Endothelial cell of umbilical vein (primary cell): ENCODE measurements at regions of chr15 and their contacts with region 1.

Region 1: DNA sequence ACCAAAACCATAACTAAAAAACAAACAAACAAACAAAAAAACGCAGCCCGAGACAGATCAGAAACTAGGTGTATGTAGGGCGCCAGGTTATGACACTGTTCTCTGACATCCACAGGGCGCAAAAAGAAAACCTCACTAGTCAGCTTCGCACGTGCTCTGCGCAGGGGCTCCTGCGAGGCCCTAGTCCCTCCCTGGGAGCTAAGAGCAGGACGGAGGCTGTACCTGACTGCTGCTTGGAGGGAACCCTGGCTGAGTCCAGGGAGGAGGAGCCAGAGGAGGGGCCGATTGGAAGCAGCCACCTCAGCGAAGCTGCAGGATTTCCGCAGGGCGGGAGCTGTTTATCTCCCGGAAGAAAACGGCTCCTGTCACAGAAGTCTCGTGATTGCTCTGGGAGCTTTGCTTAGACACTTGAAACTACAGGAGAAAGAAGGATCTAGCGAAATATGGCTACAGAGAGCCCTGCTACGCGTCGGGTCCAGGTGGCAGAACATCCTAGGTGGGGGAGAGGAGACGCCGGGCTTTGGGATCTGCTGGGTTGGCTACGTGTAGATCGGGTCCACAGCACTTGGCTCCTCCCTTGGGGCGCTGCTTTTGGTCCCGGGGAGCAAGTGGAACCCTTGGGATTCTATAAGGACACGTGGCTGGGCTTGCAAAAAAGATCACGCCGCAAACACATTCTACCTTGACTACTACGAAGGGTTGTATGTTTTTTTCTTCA is at the start of gene GALK2:
- DNase-seq: peak; percentile 85
- H3K4me3 ChIP-seq: peak within 1 kb of the TSS; percentile 66 to 94 (median 88)
- H3K27ac ChIP-seq: peak within 1 kb of the TSS; percentile 78
- H3K4me1 ChIP-seq: peaks cover 10% of the 10 kb centered on the region
- H3K27me3 ChIP-seq: no peaks in the 10 kb centered on the region
- CTCF ChIP-seq: no peak
- POLR2A ChIP-seq: peak; percentile 87
- total RNA-seq, gene GALK2: 31.3 and 34.6 TPM in 2 replicates

Region 2: DNA sequence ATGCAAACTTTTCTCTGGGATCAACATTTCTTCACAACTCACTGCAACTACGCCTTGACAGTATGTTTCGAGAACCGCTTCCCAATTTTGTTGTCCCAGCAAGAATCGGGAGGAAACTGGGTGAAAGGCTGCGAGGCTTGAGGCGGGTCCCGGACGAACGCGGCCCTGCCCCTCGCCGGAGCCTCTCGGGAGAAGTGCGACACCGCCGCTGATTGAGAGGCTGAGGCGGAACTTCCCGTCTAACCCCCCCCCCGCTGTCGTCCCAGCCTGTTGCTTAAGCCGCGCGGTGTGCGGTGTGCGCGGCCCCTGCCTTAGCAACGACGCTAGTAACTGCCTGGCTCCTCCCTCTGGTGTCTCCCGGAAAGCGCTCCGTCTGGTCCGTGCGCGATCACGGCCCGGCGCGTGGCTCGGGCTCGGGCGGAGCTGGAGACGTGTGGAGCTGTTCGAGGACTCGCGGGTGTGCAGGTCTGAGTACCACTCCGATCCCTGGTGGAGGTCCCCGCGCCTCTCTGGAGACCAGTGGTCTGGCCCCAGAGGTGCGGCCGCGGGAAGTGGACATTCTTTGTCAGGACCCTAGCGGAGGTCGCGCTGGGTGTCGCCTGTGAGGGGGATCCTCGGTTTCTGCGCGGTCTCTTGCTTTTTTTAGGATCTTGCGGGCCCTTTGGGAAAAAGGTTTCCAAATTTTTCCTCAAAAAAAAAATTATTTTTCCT is 450.8 kb after region 1 on chr15 and contains the starts of genes DTWD1 and FAM227B:
- CTCF ChIA-PET with region 1: no interaction called
- POLR2A ChIA-PET with region 1: no interaction called
- dilution Hi-C with region 1: no loop called
- intact Hi-C with region 1: loop called (anchors 5 kb)
- DNase-seq: peak; percentile 98
- H3K4me3 ChIP-seq: peak within 1 kb of the TSS; percentile 79 to 95 (median 91)
- H3K27ac ChIP-seq: peak within 1 kb of the TSS; percentile 64
- H3K4me1 ChIP-seq: peaks cover 11% of the 10 kb centered on the region
- H3K27me3 ChIP-seq: no peaks in the 10 kb centered on the region
- CTCF ChIP-seq: no peak
- POLR2A ChIP-seq: peak; percentile 88
- total RNA-seq, gene DTWD1: 18.7 and 20.1 TPM in 2 replicates
- total RNA-seq, gene FAM227B: 1.5 and 1.8 TPM in 2 replicates